Motor neuron (in vitro differentiated cells): ENCODE measurements at regions of chr15 and their contacts with region 1.

Region 1: GRCh38 chr15:41557673-41558399 is 1.2 kb upstream of the TYRO3 start:
- ATAC-seq: peak; percentile 55 to 78 (median 74)
- H3K4me3 ChIP-seq: peak overlapping the region; percentile 5 to 97 (median 65)
- H3K27ac ChIP-seq: no peak overlapping the region
- H3K4me1 ChIP-seq: peaks cover 18 to 21% of the 10 kb centered on the region in 2 donors

Region 2: GRCh38 chr15:41790756-41791546 is 233.1 kb after region 1 on chr15:
- in situ Hi-C with region 1: loop called in 1 of 9 experiments (anchors 25 kb)
- ATAC-seq: peak in 2 of 8 experiments; percentile 22 to 24
- H3K4me3 ChIP-seq: no peak overlapping the region
- H3K27ac ChIP-seq: no peak overlapping the region
- H3K4me1 ChIP-seq: no peaks in the 10 kb centered on the region

Region 3: GRCh38 chr15:41811432-41812195 is 253.8 kb after region 1 on chr15:
- in situ Hi-C with region 1: loop called in 5 of 9 experiments (anchors 10 to 25 kb)
- ATAC-seq: peak; percentile 93 to 98 (median 97)
- H3K4me3 ChIP-seq: no peak overlapping the region
- H3K27ac ChIP-seq: no peak overlapping the region
- H3K4me1 ChIP-seq: no peaks in the 10 kb centered on the region

Region 4: DNA sequence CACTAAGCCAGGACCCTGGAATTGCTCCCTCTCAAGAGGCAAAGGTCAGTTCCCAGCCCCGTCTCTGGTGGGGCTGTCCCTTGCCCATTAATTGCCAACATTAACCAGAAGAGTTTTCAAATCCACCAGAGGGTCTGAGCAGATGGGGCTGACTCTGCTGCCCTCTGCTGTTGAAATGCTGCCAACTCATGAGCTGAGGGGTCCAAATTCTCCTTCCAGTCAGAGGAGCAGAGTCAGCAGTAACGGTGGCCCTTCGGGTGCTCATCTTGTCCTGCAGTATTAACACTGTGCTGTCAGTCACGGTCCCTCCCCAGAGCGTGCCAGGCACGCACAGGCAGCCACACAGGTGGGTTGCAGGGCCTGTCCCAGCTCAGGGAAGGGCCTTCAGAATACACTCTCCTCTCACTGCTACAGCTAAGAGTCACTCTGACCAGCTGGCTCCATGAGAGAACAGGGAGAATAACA is 346.7 kb after region 1 on chr15:
- in situ Hi-C with region 1: no loop called
- ATAC-seq: peak; percentile 78 to 95 (median 85)
- H3K4me3 ChIP-seq: no peak overlapping the region
- H3K27ac ChIP-seq: no peak overlapping the region
- H3K4me1 ChIP-seq: no peaks in the 10 kb centered on the region